CD8-positive, alpha-beta T cell (primary cell): ENCODE measurements at regions of chr11 and their contacts with region 1.

Region 1: DNA sequence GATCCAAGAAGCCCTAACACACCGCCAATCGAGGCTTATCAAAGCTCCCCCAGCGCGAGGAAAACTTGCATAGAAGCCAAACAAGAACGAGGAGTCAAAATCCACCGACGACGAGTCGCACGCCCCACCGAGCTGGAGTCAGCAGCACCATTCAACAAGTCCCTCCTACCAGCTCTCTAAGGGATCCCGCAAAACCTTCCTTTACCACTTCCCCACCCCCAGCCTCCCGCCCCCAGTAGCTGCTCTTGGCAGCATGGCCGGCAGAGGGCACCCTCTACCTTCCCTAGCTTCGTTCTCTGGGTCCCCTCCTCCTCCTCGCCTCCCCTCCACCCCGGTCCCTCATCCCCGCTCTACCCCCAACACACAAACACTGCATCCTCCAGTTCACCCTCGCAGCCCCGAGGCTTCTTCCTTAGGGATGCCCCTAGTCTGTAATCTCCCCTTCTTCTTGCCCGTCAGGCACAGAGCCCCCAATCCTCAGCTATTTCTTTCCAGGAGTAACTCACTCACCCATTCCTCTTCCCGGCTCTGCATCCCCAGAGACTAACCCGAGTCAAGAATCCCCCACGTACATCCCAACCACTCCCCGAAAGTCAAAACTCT is 1.3 kb downstream of the BDNF start:
- DNase-seq: peak in 7 of 9 experiments; percentile 20 to 53 (median 51)
- ATAC-seq: peak; percentile 62
- H3K4me3 ChIP-seq: no peak overlapping the region
- H3K4me3 Mint-ChIP-seq: peak overlapping the region; percentile 57
- H3K27ac ChIP-seq: no peak overlapping the region
- H3K27ac Mint-ChIP-seq: no peak overlapping the region
- H3K4me1 ChIP-seq: peaks cover 18% of the 10 kb centered on the region
- H3K4me1 Mint-ChIP-seq: peaks cover 26% of the 10 kb centered on the region
- H3K27me3 ChIP-seq: peaks cover 7 to 17% of the 10 kb centered on the region in 2 experiments
- H3K27me3 Mint-ChIP-seq: peaks cover 55% of the 10 kb centered on the region
- CTCF ChIP-seq: no peak

Region 2: DNA sequence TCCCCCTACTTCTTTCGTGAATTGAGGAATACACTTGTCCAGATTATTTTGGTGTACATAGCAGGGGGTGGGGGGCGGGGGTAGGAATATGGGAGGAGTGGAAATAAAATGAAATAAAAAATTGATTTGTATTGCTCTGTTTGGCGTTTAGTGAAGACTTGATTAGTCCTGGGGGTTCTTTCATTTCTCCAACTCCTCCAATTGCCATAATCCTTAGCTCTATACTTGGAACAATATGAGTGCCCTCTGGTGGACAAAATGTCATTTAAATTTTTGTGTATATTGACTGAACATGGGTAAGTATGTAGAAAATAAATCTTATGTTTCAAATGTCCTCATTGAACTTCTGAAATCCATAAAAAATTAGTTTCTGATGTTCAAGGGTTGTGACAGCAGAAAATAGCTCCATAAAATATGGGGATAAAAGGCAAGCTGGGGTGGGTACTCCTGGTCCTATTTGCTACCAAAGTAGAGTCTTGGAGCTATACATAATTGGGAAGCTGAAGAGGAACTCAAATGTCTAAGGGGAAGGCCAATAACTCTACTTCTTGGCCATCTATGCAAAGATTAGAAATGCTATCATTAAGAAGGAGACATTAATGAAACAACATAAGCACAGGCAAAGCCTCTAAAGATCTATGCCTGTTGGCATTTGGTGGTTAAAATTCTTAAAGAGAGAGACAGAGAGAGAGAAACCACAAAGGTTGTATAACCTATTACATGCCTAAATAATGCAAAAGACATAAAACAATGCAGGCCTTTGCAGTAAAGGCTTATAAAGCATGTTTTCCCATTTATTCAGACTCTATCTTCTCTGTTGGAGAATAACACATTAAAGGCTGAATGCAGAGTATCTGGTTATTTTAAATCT is 830.8 kb after region 1 on chr11:
- CTCF ChIA-PET with region 1: interaction called, 3 read pairs
- POLR2A ChIA-PET with region 1: no interaction called
- intact Hi-C with region 1: loop called in 1 of 2 experiments (anchors 5 kb)
- DNase-seq: peak in 1 of 9 experiments; percentile 2
- ATAC-seq: no peak
- H3K4me3 ChIP-seq: no peak overlapping the region
- H3K4me3 Mint-ChIP-seq: no peak overlapping the region
- H3K27ac ChIP-seq: no peak overlapping the region
- H3K27ac Mint-ChIP-seq: no peak overlapping the region
- H3K4me1 ChIP-seq: no peaks in the 10 kb centered on the region
- H3K4me1 Mint-ChIP-seq: no peaks in the 10 kb centered on the region
- H3K27me3 ChIP-seq: no peaks in the 10 kb centered on the region
- H3K27me3 Mint-ChIP-seq: no peaks in the 10 kb centered on the region
- CTCF ChIP-seq: no peak